ENCODE measurements at regions of chr19 and their contacts with region 1.

Region 1: GRCh38 chr19:50628146-50628545 is 11.5 kb downstream of the SYT3 start:
- DNase-seq: no peak
- H3K4me3 ChIP-seq: no peak overlapping the region
- H3K27ac ChIP-seq: no peak overlapping the region
- H3K4me1 ChIP-seq: no peaks in the 10 kb centered on the region
- H3K27me3 ChIP-seq: no peaks in the 10 kb centered on the region
- CTCF ChIP-seq: no peak

Region 2: DNA sequence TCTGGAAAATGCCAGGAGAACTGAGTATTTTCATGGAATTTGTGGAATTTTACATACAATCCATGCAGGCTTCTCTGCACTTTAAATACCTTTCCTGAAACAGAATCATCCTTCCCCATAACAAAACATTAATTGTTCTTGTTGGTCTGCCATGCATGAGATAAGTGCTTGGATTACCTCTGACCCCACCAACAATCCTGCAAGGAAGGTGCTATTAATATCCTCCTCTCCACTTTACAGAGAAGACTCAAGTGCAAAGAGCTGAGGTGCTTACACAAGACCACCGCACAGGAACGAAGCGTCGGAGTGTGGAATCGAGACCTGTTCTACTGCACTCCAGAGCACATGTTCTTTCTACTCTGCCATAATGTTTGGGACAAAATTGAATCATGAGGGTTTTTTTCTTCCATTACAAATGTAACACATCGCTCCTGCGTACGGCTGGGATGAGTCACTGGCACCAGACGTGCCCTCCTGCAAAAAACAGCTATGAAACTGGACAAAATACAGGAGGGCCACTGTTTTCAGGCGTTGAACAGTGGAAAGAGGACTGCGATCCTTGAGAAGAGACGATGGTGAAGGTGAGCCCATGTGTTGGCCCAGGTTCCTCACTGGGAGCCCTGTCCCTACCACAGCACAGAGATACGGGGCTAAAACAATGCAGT is 47.0 kb before region 1 on chr19:
- CTCF ChIA-PET with region 1: no interaction called
- dilution Hi-C with region 1: loop called (anchors 5 kb)
- in situ Hi-C with region 1: no loop called
- intact Hi-C with region 1: no loop called
- DNase-seq: no peak
- H3K4me3 ChIP-seq: no peak overlapping the region
- H3K27ac ChIP-seq: no peak overlapping the region
- H3K4me1 ChIP-seq: no peaks in the 10 kb centered on the region
- H3K27me3 ChIP-seq: no peaks in the 10 kb centered on the region
- CTCF ChIP-seq: no peak

Region 3: GRCh38 chr19:50705422-50706019 is 77.4 kb after region 1 on chr19:
- CTCF ChIA-PET with region 1: no interaction called
- dilution Hi-C with region 1: loop called (anchors 5 kb)
- in situ Hi-C with region 1: no loop called
- intact Hi-C with region 1: no loop called
- DNase-seq: peak; percentile 50
- H3K4me3 ChIP-seq: no peak overlapping the region
- H3K27ac ChIP-seq: no peak overlapping the region
- H3K4me1 ChIP-seq: no peaks in the 10 kb centered on the region
- H3K27me3 ChIP-seq: peaks cover 3% of the 10 kb centered on the region
- CTCF ChIP-seq: peak; percentile 68 to 84